ENCODE measurements at regions of chr20 and their contacts with region 1.

Region 1: GRCh38 chr20:44080646-44081267 is 106.2 kb downstream of the JPH2 start:
- DNase-seq: peak; percentile 57
- H3K4me3 ChIP-seq: no peak overlapping the region
- H3K27ac ChIP-seq: no peak overlapping the region
- H3K4me1 ChIP-seq: peaks cover 8% of the 10 kb centered on the region
- H3K27me3 ChIP-seq: no peaks in the 10 kb centered on the region
- CTCF ChIP-seq: peak; percentile 92 to 100

Region 2: DNA sequence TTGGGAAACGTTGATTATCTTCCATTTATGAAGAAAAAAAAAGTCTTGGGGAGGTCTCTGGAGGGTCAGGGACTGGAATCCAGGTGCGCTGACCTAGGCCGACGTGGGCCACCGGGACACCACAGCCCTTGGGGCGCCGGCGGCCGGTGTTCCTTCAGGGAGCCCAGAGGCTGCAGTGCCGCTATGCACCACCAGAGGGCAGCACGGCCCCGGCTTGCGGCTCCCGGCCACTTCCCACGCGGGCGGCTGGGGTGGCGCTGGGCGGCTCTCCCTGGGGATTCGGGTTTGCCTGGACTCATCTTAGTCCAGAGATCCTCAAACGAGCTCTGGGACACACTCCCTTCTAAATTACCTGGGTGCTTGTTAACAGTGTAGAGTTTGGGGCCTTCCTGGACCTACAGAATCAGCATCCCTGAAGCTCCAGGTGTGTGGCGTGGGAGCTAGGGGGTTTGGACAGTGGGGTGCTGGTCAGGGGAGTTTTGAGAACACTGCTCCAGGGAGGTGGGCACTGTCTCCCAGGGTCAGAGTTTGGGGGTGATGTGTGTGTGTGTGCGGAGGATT is 330.9 kb before region 1 on chr20:
- CTCF ChIA-PET with region 1: interaction called, 11 read pairs
- dilution Hi-C with region 1: loop called (anchors 25 kb)
- in situ Hi-C with region 1: loop called (anchors 5 kb)
- intact Hi-C with region 1: loop called (anchors 1 kb)
- DNase-seq: peak; percentile 57
- H3K4me3 ChIP-seq: no peak overlapping the region
- H3K27ac ChIP-seq: no peak overlapping the region
- H3K4me1 ChIP-seq: peaks cover 22% of the 10 kb centered on the region
- H3K27me3 ChIP-seq: no peaks in the 10 kb centered on the region
- CTCF ChIP-seq: peak; percentile 85 to 99

Region 3: DNA sequence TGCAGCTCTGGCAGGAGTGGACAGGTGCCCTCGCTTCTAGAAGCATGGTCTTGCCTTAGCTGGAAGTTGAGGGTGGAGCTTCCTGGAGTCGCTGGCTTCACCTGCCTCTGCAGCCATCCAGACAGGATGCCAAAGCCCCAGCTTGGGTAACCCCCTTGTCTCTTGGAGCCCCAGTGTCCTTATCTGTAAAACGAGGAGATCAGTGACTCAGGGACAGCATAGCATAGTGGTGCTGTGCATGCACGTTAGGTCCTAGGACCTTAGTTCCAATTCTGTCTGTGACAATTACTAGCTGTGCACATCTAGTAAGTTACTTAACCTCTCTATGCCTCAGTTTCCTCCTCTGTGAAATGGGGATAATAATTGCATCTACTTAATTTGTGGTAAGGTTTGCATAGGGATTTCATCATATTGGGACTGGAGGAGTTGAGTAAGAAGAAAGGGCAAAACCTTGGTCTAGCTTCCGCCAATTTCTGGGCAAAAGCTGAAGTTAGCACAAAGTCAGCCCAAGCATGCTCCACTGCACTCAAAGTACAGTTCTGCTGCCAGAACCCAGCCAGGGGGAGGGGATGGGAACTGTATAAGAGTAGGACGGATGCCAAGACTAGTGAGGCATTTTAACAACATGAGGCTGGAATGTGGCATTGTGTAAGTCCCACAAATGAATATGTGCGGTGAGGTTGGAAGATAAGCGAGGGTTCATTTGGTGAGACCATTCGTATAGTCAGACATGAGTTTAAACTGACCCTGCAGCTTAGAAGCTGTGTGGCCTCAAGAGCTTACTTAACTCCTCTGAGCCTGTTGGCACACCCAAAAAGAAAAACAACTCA is 141.6 kb before region 1 on chr20:
- CTCF ChIA-PET with region 1: no interaction called
- dilution Hi-C with region 1: no loop called
- in situ Hi-C with region 1: no loop called
- intact Hi-C with region 1: loop called (anchors 5 kb)
- DNase-seq: peak; percentile 96
- H3K4me3 ChIP-seq: no peak overlapping the region
- H3K27ac ChIP-seq: peak overlapping the region; percentile 11
- H3K4me1 ChIP-seq: peaks cover 65% of the 10 kb centered on the region
- H3K27me3 ChIP-seq: no peaks in the 10 kb centered on the region
- CTCF ChIP-seq: no peak

Region 4: DNA sequence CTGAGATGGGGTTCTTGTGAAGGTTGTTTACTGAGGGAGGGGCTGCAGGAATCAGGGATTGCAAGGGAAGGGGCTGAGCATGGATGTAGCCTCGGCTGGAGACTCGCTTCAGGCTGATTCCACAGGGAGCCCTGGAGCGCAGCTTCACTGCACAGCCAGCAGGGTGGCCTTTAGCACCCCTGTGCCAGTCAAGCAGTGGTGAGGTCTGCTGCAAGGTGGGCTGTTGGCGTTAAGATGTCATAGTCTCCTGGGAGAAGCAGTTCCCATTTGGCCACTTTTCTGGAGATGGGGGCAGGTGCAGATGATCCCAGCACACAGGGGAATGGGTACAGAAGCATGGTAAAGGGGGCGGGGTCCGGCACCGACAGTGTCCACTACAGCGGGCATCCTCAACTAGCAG is 39.8 kb before region 1 on chr20:
- CTCF ChIA-PET with region 1: no interaction called
- dilution Hi-C with region 1: loop called (anchors 5 kb)
- in situ Hi-C with region 1: no loop called
- intact Hi-C with region 1: no loop called
- DNase-seq: no peak
- H3K4me3 ChIP-seq: no peak overlapping the region
- H3K27ac ChIP-seq: no peak overlapping the region
- H3K4me1 ChIP-seq: no peaks in the 10 kb centered on the region
- H3K27me3 ChIP-seq: no peaks in the 10 kb centered on the region
- CTCF ChIP-seq: no peak

Region 5: DNA sequence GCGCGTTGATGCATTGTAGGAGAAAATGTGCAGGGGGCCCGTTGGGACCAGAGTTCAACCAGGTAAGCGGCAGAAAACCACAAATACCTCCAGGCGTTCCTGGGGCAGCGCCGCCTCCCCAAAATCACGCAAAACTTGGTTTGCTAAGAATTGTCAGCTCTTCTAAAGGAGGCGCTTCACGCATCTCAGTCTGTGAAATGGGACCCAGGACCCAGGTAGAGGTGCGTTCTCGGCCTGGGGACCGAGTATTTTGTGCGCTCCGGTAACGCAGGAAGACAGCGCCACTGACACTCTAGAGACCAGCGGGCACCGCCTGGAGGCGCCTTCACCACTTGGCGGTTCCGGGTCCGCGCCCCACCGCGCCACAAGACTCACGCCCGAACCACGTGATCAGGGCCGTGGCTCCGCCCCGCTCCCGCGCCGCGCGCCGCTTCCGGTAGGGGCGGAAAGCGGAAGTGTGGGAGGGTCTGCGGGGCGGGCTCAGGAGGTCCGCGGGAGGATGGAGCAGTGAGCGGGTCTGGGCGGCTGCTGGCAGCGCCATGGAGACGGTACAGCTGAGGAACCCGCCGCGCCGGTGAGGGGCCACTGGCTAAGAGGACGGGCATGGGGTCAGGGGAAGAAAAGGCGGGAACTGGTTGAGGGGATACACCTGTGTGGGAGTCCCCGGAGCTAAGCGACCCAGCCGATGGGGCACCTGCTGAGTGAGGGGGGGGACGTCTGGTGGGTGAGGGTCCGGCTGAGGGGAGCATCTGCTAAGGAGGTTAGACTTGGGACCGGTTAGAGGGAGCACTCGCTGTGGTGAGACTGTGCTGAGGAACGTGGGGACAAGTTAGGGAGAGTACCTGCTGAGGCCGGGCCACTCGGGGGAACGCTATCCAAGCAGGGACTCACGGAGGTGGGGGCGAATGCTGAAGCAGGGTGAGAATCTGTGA is 885.5 kb after region 1 on chr20 and contains the start of gene STK4:
- CTCF ChIA-PET with region 1: no interaction called
- dilution Hi-C with region 1: no loop called
- in situ Hi-C with region 1: no loop called
- intact Hi-C with region 1: no loop called
- DNase-seq: peak; percentile 92
- H3K4me3 ChIP-seq: peak within 1 kb of the TSS; percentile 80 to 92 (median 90)
- H3K27ac ChIP-seq: peak within 1 kb of the TSS; percentile 66
- H3K4me1 ChIP-seq: peaks cover 18% of the 10 kb centered on the region
- H3K27me3 ChIP-seq: no peaks in the 10 kb centered on the region
- CTCF ChIP-seq: peak; percentile 15 to 58
- total RNA-seq, gene STK4: 30.7 to 42.7 TPM

Measured in mammary epithelial cell (primary cell).